Heart left ventricle (tissue), 16 donors: ENCODE measurements at regions of chr6 and their contacts with region 1.

Region 1: DNA sequence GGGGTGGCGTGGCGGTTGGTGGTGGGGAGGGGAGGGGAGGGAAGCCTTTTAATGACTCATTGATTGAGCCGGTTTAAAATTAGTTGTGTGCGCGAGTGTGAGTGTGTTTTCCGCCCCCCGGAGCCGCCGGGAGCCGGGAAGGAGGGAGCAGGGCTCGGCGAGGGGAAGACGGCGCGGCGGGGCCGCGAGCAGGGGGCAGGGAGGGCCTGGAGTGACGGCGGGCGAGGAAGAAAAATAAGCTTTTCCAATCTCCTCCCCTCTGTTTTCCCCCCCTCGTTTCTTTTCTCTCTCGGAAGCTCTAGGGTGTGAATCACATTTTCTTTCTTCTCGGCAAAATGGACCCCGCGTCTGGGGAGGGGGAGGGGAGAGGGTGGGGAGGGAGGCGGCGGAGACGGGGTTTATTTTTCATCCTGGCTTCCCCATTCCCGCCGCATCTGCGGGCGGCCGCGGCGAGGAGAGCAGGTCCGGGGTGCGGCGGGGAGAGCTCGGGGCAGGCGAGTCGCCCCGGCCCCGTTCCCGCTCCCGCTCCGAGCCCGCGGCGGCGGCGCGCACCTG is 847 bp downstream of the BICRAL start:
- DNase-seq: peak; percentile 82 to 89 (median 86)
- ATAC-seq: peak; percentile 47 to 82 (median 80)
- H3K4me3 ChIP-seq: peak overlapping the region; percentile 63 to 97 (median 90)
- H3K27ac ChIP-seq: peak overlapping the region; percentile 98 to 100 (median 100)
- H3K4me1 ChIP-seq: peaks cover 3 to 51% (median 29%) of the 10 kb centered on the region in 12 donors
- H3K27me3 ChIP-seq: no peaks in the 10 kb centered on the region
- CTCF ChIP-seq: no peak
- POLR2A ChIP-seq: peak in 1 of 2 donors; percentile 70

Region 2: GRCh38 chr6:42745707-42746462 is 36.8 kb before region 1 on chr6 and contains the start of gene TBCC:
- intact Hi-C with region 1: loop called (anchors 1 to 5 kb)
- DNase-seq: peak; percentile 96 to 97 (median 97)
- ATAC-seq: peak; percentile 94 to 96 (median 95)
- H3K4me3 ChIP-seq: peak within 1 kb of the TSS; percentile 75 to 99 (median 96)
- H3K27ac ChIP-seq: peak within 1 kb of the TSS; percentile 85 to 97 (median 94)
- H3K4me1 ChIP-seq: peaks cover 0 to 37% (median 24%) of the 10 kb centered on the region in 12 donors
- H3K27me3 ChIP-seq: no peaks in the 10 kb centered on the region
- CTCF ChIP-seq: no peak
- POLR2A ChIP-seq: peak; percentile 79 to 93
- total RNA-seq, gene TBCC: 10.4 to 21.7 (median 15.4) TPM

Region 3: GRCh38 chr6:42751055-42751454 is 31.6 kb before region 1 on chr6:
- intact Hi-C with region 1: loop called (anchors 1 to 5 kb)
- DNase-seq: no peak
- ATAC-seq: no peak
- H3K4me3 ChIP-seq: no peak overlapping the region
- H3K27ac ChIP-seq: no peak overlapping the region
- H3K4me1 ChIP-seq: peaks cover 0 to 20% (median 7%) of the 10 kb centered on the region in 12 donors
- H3K27me3 ChIP-seq: no peaks in the 10 kb centered on the region
- CTCF ChIP-seq: no peak
- POLR2A ChIP-seq: no peak

Region 4: GRCh38 chr6:42819803-42820511 is 37.3 kb after region 1 on chr6:
- intact Hi-C with region 1: loop called in 3 of 10 experiments (anchors 5 kb)
- DNase-seq: no peak
- ATAC-seq: peak in 2 of 4 donors; percentile 56 to 58
- H3K4me3 ChIP-seq: peak overlapping the region in 2 of 12 donors; percentile 20 to 39
- H3K27ac ChIP-seq: peak overlapping the region in 10 of 12 donors; percentile 47 to 79 (median 60)
- H3K4me1 ChIP-seq: peaks cover 0 to 30% (median 17%) of the 10 kb centered on the region in 12 donors
- H3K27me3 ChIP-seq: no peaks in the 10 kb centered on the region
- CTCF ChIP-seq: peak in 2 of 12 donors; percentile 16 to 25
- POLR2A ChIP-seq: no peak

Region 5: GRCh38 chr6:42879372-42880239 is 96.9 kb after region 1 on chr6 and contains the start of gene RPL7L1:
- intact Hi-C with region 1: loop called in 4 of 10 experiments (anchors 5 kb)
- DNase-seq: peak; percentile 84 to 91 (median 85)
- ATAC-seq: peak; percentile 98 to 99 (median 98)
- H3K4me3 ChIP-seq: peak within 1 kb of the TSS; percentile 24 to 84 (median 76)
- H3K27ac ChIP-seq: peak within 1 kb of the TSS; percentile 82 to 99 (median 92)
- H3K4me1 ChIP-seq: peaks cover 0 to 34% (median 15%) of the 10 kb centered on the region in 12 donors
- H3K27me3 ChIP-seq: no peaks in the 10 kb centered on the region
- CTCF ChIP-seq: peak in 3 of 12 donors; percentile 7 to 28 (median 21)
- POLR2A ChIP-seq: peak in 1 of 2 donors; percentile 38
- total RNA-seq, gene RPL7L1: 39.8 to 71.1 (median 49.2) TPM

Region 6: GRCh38 chr6:42984001-42984923 is 201.6 kb after region 1 on chr6 and contains the start of gene PPP2R5D:
- intact Hi-C with region 1: loop called in 1 of 10 experiments (anchors 5 kb)
- DNase-seq: peak; percentile 97 to 99 (median 98)
- ATAC-seq: peak; percentile 95 to 99 (median 98)
- H3K4me3 ChIP-seq: peak within 1 kb of the TSS; percentile 74 to 97 (median 86)
- H3K27ac ChIP-seq: peak within 1 kb of the TSS; percentile 60 to 93 (median 90)
- H3K4me1 ChIP-seq: peaks cover 3 to 61% (median 45%) of the 10 kb centered on the region in 12 donors
- H3K27me3 ChIP-seq: no peaks in the 10 kb centered on the region
- CTCF ChIP-seq: no peak
- POLR2A ChIP-seq: peak in 1 of 2 donors; percentile 93
- total RNA-seq, gene PPP2R5D: 30.9 to 51.3 (median 35.1) TPM